ENCODE measurements at regions of chr17 and their contacts with region 1.

Region 1: GRCh38 chr17:52106638-52107261 is 51.8 kb downstream of the CA10 start:
- DNase-seq: peak in 6 of 10 donors; percentile 26 to 75 (median 60)

Region 2: DNA sequence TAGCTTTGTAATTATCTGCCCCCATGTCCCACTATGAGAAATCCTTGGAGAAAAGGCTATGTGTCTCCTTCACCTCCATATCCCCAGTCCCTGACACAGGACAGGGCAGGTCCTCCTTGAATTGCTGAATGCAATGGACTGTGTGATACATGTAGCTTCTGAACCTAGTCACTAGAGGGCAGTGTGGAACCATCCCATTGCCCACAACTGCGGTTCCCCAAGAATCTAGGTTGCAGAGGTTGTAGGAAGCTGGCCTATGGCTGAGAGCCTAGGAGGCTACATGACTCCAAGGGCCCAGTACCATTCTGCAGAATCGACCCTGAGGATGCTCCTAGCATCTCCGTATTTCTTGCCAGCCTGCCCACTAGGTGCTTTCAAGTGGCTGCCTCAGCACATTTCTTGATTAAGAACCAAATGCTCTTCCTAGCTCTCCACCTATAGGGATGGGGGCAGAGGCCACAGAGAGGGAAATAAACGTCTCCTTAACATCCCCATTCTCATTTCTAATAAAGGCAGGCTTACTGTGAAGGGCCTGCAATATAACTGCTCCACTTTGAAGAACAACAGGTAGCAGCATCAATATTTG is 342.3 kb before region 1 on chr17:
- intact Hi-C with region 1: loop called (anchors 2 kb)
- DNase-seq: peak in 8 of 10 donors; percentile 14 to 89 (median 41)

Region 3: DNA sequence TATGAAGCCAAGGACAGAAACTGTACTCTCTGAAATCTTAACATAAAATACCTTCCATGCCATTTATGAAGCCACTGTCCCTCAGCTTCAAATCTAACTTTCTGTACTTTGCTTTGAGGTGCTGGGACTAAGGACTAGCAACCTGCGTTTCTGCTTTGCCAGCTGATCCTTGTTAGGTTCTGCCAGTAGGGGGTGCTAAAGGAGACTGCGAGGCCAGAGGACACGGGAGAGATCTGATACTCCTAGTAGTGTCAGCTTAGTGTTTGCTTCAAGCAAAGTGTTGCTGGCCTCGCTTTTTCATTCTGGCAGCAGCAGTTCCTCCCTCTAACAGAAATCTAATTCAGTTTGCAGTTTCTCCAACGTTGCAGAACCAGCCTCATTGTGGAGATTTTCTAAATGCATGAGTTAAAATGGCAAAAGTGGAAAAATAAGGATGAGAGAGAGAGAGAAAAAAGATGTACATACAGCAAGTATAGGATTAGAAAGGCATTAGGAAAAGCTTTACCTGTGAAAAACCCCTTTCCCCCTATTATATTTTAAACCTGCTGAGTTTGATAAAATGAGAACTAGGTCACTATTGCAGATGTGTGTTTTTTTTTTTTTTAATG is 245.7 kb before region 1 on chr17:
- intact Hi-C with region 1: loop called (anchors 1 kb)
- DNase-seq: peak; percentile 22 to 91 (median 55)

Region 4: DNA sequence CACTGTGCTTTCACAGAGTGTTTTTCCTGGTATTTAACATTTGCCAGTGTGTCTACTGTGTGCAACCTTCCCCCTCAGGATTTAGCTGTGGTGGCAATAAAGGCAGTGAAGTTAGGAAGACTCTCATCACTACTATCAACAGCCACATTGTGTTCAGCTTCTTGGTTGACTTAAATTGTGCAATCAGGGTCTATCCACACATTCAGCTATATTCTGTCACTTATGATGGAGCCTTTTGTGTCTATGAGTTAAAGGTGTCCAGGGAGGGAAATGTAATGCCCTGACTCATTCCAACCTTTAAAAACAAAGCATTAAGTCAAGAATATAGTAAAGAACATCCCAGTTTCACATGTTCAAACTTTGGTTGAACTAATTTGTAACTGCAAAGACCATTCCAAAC is 124.6 kb before region 1 on chr17:
- intact Hi-C with region 1: no loop called
- DNase-seq: no peak

Region 5: DNA sequence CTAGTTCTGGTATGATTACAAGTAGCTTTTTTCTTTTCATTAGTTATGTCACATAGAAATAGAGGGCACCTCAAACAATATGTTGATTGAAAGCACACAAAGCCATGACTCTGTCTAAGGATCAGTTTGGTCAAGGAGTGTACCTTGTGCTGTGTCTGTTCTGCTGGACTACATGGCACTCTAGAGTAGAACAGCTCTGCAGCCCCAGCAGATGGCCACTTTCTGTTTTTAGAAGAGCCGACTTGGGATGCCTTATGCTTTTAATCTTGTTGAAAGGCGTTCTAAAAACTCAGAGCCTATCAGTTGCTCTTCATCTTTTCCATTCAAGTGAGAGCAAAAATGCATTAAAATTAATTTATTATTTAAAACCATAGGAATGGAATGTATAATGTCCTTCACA is 101.0 kb after region 1 on chr17:
- intact Hi-C with region 1: no loop called
- DNase-seq: peak in 2 of 10 donors; percentile 11 to 31